Posterior cingulate gyrus (tissue), 11 donors: ENCODE measurements at regions of chr10 and their contacts with region 1.

Region 1: DNA sequence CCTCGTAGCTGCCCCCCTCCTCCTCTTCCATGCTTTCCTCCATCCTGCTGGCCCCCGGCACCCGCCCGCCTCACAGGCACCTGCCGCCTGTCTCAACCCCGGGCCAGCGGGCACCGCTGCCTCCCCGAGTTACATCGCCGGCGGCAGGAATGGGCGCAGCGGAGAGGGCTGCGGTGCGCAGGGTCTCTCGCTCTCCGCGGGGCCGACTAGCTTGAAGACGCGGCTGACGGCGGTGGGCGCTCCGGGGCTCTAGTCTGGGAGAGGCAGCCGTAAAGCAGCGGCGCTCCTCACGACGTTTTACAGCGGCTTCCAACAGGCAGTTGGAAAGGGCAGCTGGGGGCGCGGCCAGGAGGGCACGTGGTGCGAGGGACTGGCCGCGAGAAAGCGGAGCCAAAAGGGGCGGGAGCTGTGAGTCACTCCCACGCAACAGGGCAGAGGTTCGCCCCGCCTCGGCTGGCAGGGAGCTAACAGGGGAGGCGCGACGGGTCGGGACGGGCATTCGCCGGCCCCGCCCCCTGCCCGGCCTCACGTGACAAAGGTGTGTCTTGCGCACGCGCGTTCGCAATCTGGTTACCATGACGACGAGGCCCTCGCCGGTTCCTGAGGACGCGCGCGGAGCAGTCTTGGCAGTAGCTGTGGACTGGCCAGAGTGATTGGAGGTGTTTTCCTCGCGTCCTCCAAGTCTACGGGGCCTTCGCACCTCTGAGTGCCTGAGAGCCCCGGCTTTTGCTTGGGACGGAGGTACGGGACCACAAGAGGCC is at the start of gene CACUL1:
- DNase-seq: peak; percentile 99 to 100 (median 100)

Region 2: DNA sequence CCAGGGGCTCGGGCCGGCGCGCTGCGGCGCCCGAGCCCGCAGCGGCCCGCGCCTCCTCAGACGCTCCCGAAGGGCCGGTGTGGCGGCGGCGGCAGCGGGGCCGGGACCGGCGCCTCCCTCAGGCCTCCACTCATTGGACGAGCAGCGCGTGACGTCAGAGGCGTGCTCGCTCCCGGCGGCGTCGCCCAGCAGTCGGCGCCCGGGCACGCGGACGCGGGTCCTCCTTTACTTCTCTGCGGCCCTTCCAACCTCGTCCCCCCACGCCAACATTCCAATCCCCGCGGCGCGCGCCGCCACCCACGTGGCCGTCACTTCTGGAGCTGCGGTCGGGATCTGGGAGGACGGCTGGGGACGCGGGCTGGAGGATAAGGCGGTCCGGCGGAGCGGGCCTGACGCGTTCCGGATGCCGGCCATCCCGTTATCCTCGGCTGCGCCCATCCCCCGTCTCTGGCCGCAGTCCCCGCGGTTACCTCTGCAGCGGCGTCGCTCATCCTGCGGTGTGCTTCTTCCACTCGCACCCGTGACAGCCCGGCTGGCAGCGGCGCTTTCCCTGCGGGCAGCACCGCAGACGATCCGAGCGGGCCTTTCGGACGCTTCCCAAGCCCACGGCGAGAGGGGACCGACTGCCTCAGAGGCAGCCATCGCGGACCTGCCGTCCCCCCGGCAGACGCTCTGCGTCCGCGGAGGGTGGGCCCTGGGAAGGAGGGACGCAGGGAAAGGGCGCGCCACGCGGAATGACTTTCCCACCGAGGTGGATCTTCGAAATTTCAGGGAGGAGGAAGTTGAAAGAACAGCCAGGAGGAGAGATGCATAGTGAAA is 1379.3 kb before region 1 on chr10 and contains the start of gene PDZD8:
- intact Hi-C with region 1: loop called (anchors 10 kb)
- DNase-seq: peak; percentile 91 to 99 (median 93)

Region 3: DNA sequence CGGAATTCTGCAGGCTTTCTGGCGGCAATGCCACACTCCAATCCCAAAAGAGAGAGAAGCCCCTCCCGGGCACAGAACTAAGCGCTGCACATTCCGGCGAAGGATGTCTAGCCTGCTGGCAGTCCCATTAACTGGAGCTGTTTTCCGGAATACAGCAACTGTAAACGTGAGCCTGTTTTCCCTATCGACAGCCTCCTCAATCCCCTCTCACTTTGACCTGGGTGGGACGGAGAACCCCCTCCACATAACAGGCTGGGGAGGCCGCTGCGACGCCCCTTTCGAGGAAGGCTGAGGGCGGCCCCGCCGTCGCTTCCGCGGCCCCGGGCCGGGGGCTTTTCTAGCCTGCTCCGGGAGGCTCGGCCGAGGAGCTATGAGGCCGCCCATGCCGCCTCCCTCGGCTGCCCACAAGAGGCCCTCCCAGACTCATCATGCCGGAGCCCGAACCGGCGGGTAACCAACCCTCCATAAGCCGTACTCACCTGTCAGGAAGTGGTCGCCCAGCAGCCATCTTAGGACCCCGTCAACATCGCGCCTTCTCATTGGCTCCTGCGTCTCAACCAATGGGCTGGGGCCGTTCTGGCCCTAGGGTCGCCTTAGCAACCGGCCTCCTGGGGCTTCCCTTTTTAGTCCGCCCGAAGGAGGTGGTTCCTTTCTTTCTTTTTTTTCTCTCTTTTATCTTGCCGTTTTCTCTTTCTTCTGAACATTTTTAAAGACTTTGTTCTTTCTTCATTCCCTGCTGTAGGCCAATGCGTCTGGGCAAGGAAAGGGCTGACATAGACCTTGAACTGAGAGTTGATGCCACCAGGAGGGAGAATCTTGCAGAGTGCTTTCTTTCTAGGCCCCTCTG is 412.9 kb before region 1 on chr10 and contains the start of gene FAM204A:
- intact Hi-C with region 1: loop called (anchors 5 kb)
- DNase-seq: peak; percentile 86 to 99 (median 92)

Region 4: DNA sequence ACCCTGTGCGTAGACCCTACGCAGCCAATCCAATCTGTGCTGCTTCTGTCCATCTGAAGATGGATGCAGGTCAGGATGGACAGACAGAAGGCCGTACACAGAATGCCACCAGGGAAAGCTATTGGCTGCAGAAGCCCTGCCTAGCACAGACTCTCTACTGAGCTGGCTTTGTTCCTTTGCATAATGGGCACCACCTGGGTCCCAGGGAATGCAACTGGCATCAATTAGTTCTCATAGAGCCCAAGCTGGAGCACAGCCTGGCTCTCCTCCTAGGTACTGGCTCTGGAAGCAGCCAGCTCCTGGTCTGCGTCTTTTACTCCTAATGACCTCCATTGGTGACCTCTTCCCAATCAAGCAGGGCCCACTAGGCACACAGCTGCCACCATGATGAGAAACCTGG is 26.6 kb after region 1 on chr10:
- intact Hi-C with region 1: no loop called
- DNase-seq: no peak

Region 5: GRCh38 chr10:119103903-119104652 is 349.2 kb after region 1 on chr10 and contains the start of gene DENND10:
- intact Hi-C with region 1: loop called (anchors 10 kb)
- DNase-seq: peak; percentile 72 to 97 (median 84)